ENCODE measurements at regions of chr1 and their contacts with region 1.

Region 1: GRCh38 chr1:236759252-236759859 is 35.7 kb upstream of the MTR start:
- DNase-seq: peak; percentile 47 to 75 (median 62)
- ATAC-seq: peak; percentile 75
- H3K4me3 ChIP-seq: no peak overlapping the region
- H3K27ac ChIP-seq: no peak overlapping the region
- H3K4me1 ChIP-seq: peaks cover 2 to 8% of the 10 kb centered on the region in 2 experiments; a peak in 3 of 5 replicates
- H3K27me3 ChIP-seq: peaks cover 0 to 9% of the 10 kb centered on the region in 2 experiments; a peak in 2 of 5 replicates
- CTCF ChIP-seq: peak; percentile 51 to 77 (median 77)
- EP300 ChIP-seq: no peak
- POLR2A ChIP-seq: no peak
- RAD21 ChIP-seq: peak; percentile 65 to 78

Region 2: DNA sequence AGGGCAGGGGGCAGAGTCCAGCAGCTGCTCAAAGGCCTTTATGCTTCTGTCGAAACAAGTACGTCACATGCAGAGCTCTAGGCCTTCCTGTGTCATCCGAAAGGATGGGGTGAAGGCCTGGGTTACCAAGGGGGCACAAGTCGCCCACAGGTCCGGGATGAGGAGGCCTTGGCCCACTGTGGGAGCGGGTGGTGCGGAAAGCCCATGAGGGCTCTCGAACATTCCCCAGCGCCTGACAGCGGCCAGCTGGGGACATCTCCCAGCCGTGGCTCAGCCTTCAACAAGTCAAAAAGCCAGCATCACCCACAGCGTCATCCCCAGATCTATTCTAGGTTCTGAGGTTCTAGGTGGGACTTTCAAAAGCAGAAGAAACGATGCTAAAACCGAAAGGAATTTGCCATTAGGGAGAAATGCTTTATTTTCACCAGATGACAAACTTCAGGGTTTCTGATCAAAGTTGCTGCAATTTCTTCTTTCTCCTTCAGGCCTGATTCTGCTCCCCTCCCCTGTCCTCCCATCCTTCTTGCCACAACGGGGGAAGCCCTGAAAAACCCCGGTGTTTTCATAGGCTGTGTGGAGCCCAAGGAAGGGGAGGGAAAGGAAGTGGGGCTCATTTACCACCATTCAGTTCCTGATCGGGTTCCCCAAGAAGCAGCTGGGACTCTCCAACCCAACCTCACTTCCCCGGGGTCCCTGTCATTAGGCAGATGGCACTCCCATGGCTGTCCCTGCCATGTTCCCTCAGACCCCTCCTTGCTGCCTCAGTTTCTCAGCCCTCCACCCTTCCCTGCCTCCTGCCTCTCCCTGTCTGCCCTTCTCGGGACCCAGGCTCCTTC is 599.4 kb before region 1 on chr1:
- CTCF ChIA-PET with region 1: no interaction called
- POLR2A ChIA-PET with region 1: no interaction called
- in situ Hi-C with region 1: no loop called
- intact Hi-C with region 1: no loop called
- DNase-seq: no peak
- ATAC-seq: peak; percentile 38
- H3K4me3 ChIP-seq: no peak overlapping the region
- H3K27ac ChIP-seq: no peak overlapping the region
- H3K4me1 ChIP-seq: 0 out of 5 replicates have a peak, but pooled peaks cover 0 to 5% of the 10 kb centered on the region in 2 experiments
- H3K27me3 ChIP-seq: peaks cover 28 to 55% of the 10 kb centered on the region in 2 experiments
- CTCF ChIP-seq: no peak
- EP300 ChIP-seq: no peak
- POLR2A ChIP-seq: no peak
- RAD21 ChIP-seq: no peak

Region 3: DNA sequence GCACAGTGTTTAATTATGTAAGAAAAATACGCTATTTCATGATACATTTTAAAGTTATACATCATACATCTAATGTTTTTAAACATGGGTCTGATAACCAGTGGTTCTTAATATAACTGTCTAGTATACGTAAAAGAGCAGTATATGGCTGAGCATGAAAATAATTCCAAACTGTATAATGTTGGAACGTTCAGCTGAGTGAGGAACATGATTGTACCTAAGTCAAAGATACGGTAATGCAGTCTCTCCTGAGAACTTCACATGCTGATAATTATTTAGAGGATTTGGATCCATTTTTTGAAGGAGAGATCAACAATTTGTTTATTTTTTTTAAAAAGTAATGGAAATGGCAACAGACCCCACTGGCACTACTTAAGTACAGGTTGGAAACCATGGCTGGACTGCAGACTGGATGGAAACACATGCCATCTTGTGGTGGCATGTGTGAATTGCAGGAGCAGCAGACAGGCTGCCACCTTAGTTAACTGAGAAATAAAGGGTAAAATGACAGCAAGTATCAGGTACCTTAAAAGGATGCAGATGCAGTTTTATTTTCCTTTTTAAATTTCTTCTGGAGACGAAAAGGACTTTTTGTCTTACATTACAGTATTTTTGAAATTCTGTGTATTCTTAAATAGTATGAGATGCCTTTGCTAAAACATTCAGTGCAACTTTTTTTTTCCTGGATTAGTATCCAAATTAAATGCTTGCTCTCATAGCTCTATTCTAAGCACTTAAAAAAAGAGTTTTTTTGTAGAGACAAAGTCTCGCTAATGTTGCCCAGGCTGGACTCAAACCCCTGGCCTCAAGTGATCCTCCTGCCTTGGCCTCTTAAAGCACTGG is 109.5 kb after region 1 on chr1:
- CTCF ChIA-PET with region 1: interaction called, 11 read pairs
- POLR2A ChIA-PET with region 1: no interaction called
- in situ Hi-C with region 1: no loop called
- intact Hi-C with region 1: loop called (anchors 1 kb)
- DNase-seq: peak; percentile 69 to 82 (median 79)
- ATAC-seq: peak; percentile 95
- H3K4me3 ChIP-seq: no peak overlapping the region
- H3K27ac ChIP-seq: no peak overlapping the region
- H3K4me1 ChIP-seq: no peaks in the 10 kb centered on the region
- H3K27me3 ChIP-seq: no peaks in the 10 kb centered on the region
- CTCF ChIP-seq: peak; percentile 87 to 93 (median 92)
- EP300 ChIP-seq: no peak
- POLR2A ChIP-seq: no peak
- RAD21 ChIP-seq: peak; percentile 81 to 83

Region 4: GRCh38 chr1:237041795-237042525 is 282.6 kb after region 1 on chr1 and contains the start of gene RYR2:
- CTCF ChIA-PET with region 1: no interaction called
- POLR2A ChIA-PET with region 1: no interaction called
- in situ Hi-C with region 1: no loop called
- intact Hi-C with region 1: loop called (anchors 10 kb)
- DNase-seq: no peak
- ATAC-seq: no peak
- H3K4me3 ChIP-seq: no peak within 1 kb of the TSS
- H3K27ac ChIP-seq: no peak within 1 kb of the TSS
- H3K4me1 ChIP-seq: no peaks in the 10 kb centered on the region
- H3K27me3 ChIP-seq: peaks cover 6 to 11% of the 10 kb centered on the region in 2 experiments; a peak in 4 of 5 replicates
- CTCF ChIP-seq: no peak
- EP300 ChIP-seq: no peak
- POLR2A ChIP-seq: no peak
- RAD21 ChIP-seq: no peak
- polyA plus RNA-seq, gene RYR2: 0.03 to 0.10 TPM

Measured in K562 (cell line).